MCF 10A (cell line): ENCODE measurements at regions of chr11 and their contacts with region 1.

Region 1: GRCh38 chr11:30143098-30143705 is 87.6 kb upstream of the FSHB start:
- DNase-seq: peak; percentile 60
- H3K4me3 Mint-ChIP-seq: no peak overlapping the region
- H3K27ac Mint-ChIP-seq: no peak overlapping the region
- H3K4me1 Mint-ChIP-seq: no peaks in the 10 kb centered on the region
- H3K27me3 Mint-ChIP-seq: no peaks in the 10 kb centered on the region
- CTCF ChIP-seq: peak; percentile 75

Region 2: GRCh38 chr11:29432719-29433325 is 710.4 kb before region 1 on chr11:
- CTCF ChIA-PET with region 1: interaction called, 46 read pairs
- POLR2A ChIA-PET with region 1: no interaction called
- intact Hi-C with region 1: loop called (anchors 5 kb)
- DNase-seq: peak; percentile 47
- H3K4me3 Mint-ChIP-seq: no peak overlapping the region
- H3K27ac Mint-ChIP-seq: no peak overlapping the region
- H3K4me1 Mint-ChIP-seq: peaks cover 8% of the 10 kb centered on the region
- H3K27me3 Mint-ChIP-seq: no peaks in the 10 kb centered on the region
- CTCF ChIP-seq: peak; percentile 69

Region 3: DNA sequence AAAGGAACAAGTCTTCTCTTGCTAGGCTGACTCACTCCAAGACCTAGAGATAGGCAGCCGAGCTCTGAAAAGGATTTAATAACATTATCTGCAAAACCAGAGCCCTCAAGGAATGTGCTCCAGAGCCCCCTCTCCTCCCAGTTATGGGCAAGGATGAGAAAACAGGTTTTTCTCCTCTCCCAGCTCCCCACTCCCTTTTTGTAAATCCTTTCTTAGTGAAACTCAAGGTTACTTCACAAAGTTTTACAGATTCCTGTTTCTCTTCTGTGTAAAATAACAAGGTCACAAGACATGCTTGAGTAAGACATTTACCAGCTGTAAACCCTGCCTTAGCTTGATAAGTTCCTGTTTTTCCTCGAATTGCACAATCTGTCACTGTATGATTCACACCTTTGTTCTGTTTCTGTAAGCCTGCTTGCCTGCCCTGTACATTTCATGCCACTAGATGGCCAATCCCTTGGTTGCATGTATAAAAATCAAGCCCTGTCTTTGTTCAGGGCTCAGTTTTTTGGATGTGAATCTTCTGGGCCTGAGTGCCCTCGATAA is 615.7 kb before region 1 on chr11:
- CTCF ChIA-PET with region 1: interaction called, 13 read pairs
- POLR2A ChIA-PET with region 1: no interaction called
- intact Hi-C with region 1: no loop called
- DNase-seq: peak; percentile 93
- H3K4me3 Mint-ChIP-seq: peak overlapping the region; percentile 66
- H3K27ac Mint-ChIP-seq: peak overlapping the region; percentile 99
- H3K4me1 Mint-ChIP-seq: peaks cover 9% of the 10 kb centered on the region
- H3K27me3 Mint-ChIP-seq: no peaks in the 10 kb centered on the region
- CTCF ChIP-seq: peak; percentile 38

Region 4: DNA sequence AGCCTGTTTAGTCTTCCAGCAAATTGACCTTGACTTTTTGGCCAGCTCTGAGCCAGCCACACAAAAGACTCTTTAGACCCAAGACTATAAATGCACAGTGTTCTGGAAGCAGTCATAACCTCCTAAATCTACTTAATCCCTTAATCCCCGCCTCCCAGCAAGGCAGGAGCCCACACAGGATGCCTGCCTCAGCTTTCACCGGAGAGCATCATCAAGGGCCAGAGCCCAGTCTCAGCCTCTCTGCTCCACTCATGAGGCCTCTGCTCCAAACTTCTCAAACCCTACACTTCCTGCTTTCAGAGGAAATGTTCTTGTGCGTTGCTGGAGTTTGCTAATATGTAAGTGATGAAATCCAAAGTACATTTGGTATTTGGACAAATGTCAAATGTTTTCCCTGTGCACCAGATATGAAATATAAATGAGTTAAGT is 29.7 kb after region 1 on chr11:
- CTCF ChIA-PET with region 1: interaction called, 23 read pairs
- POLR2A ChIA-PET with region 1: no interaction called
- intact Hi-C with region 1: no loop called
- DNase-seq: no peak
- H3K4me3 Mint-ChIP-seq: no peak overlapping the region
- H3K27ac Mint-ChIP-seq: peak overlapping the region; percentile 33
- H3K4me1 Mint-ChIP-seq: no peaks in the 10 kb centered on the region
- H3K27me3 Mint-ChIP-seq: no peaks in the 10 kb centered on the region
- CTCF ChIP-seq: no peak

Region 5: DNA sequence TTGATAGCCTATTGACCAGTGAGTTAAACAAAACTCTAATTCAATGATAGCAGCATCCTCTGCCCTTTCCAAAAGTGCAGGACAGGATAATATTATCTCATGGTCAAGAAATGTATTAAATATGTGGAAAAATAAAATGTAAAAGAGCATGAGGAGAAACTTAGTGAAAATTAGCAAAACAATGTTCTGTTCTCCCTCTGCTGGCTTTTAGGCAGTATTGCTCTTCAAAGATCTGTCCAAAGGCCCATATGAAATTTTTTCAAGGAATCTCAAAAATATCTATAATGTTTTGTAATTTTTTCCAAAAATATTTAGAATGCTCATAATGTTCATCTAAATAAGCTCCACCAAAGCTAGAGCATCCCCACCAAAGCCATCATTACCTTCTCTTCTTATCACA is 171.4 kb after region 1 on chr11:
- CTCF ChIA-PET with region 1: interaction called, 58 read pairs
- POLR2A ChIA-PET with region 1: no interaction called
- intact Hi-C with region 1: no loop called
- DNase-seq: no peak
- H3K4me3 Mint-ChIP-seq: no peak overlapping the region
- H3K27ac Mint-ChIP-seq: no peak overlapping the region
- H3K4me1 Mint-ChIP-seq: no peaks in the 10 kb centered on the region
- H3K27me3 Mint-ChIP-seq: peaks cover 12% of the 10 kb centered on the region
- CTCF ChIP-seq: peak; percentile 63

Region 6: GRCh38 chr11:30333405-30333804 is 190.2 kb after region 1 on chr11:
- CTCF ChIA-PET with region 1: interaction called, 18 read pairs
- POLR2A ChIA-PET with region 1: no interaction called
- intact Hi-C with region 1: no loop called
- DNase-seq: peak; percentile 25
- H3K4me3 Mint-ChIP-seq: no peak overlapping the region
- H3K27ac Mint-ChIP-seq: no peak overlapping the region
- H3K4me1 Mint-ChIP-seq: peaks cover 10% of the 10 kb centered on the region
- H3K27me3 Mint-ChIP-seq: no peaks in the 10 kb centered on the region
- CTCF ChIP-seq: peak; percentile 34